ENCODE measurements at regions of chr11 and their contacts with region 1.

Region 1: GRCh38 chr11:35822815-35823495 is 120.9 kb upstream of the LDLRAD3 start:
- DNase-seq: no peak
- ATAC-seq: no peak
- H3K4me3 Mint-ChIP-seq: no peak overlapping the region
- H3K27ac Mint-ChIP-seq: no peak overlapping the region
- H3K4me1 Mint-ChIP-seq: peaks cover 15% of the 10 kb centered on the region
- H3K27me3 Mint-ChIP-seq: peaks cover 8% of the 10 kb centered on the region; the same call in 1 of the 2 replicates
- CTCF ChIP-seq: no peak

Region 2: GRCh38 chr11:35610631-35611030 is 212.3 kb before region 1 on chr11:
- CTCF ChIA-PET with region 1: interaction called, 31 read pairs
- POLR2A ChIA-PET with region 1: no interaction called
- DNase-seq: no peak
- ATAC-seq: no peak
- H3K4me3 Mint-ChIP-seq: no peak overlapping the region
- H3K27ac Mint-ChIP-seq: no peak overlapping the region
- H3K4me1 Mint-ChIP-seq: peaks cover 19% of the 10 kb centered on the region
- H3K27me3 Mint-ChIP-seq: peaks cover 21% of the 10 kb centered on the region
- CTCF ChIP-seq: no peak

Region 3: DNA sequence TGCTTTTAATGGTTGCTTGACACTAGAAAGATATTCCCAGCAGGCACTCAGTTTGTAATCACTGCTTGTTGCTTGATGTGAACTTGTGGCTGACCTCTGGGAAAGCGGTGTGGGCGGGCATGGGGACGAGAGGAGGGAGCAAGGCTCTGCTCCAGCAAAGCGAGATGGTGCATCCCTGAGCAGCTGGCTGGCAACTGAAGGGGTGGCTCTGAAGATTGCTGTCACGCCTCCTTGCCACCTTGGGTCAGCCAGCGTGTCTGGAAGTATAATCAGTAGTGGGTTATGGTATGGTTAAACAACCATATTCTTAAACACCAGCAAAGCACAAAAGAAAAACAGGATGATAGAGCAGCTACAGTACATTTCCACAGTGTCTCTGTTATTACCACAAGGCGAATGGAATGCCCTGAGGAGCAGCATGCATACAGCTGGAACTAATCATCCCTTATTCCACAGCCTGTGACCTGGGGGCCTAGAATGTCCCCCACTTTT is 35.9 kb before region 1 on chr11:
- CTCF ChIA-PET with region 1: interaction called, 32 read pairs
- POLR2A ChIA-PET with region 1: no interaction called
- DNase-seq: peak; percentile 17
- ATAC-seq: peak; percentile 71
- H3K4me3 Mint-ChIP-seq: no peak overlapping the region
- H3K27ac Mint-ChIP-seq: no peak overlapping the region
- H3K4me1 Mint-ChIP-seq: peaks cover 8% of the 10 kb centered on the region
- H3K27me3 Mint-ChIP-seq: no peaks in the 10 kb centered on the region; the same call in 1 of the 2 replicates
- CTCF ChIP-seq: no peak

Region 4: GRCh38 chr11:35919244-35919643 is 96.3 kb after region 1 on chr11:
- CTCF ChIA-PET with region 1: interaction called, 16 read pairs
- POLR2A ChIA-PET with region 1: no interaction called
- DNase-seq: no peak
- ATAC-seq: peak; percentile 51
- H3K4me3 Mint-ChIP-seq: no peak overlapping the region
- H3K27ac Mint-ChIP-seq: no peak overlapping the region
- H3K4me1 Mint-ChIP-seq: peaks cover 20% of the 10 kb centered on the region
- H3K27me3 Mint-ChIP-seq: peaks cover 4% of the 10 kb centered on the region; the same call in 1 of the 2 replicates
- CTCF ChIP-seq: no peak

Region 5: GRCh38 chr11:36023922-36024321 is 201.0 kb after region 1 on chr11:
- CTCF ChIA-PET with region 1: interaction called, 25 read pairs
- POLR2A ChIA-PET with region 1: no interaction called
- DNase-seq: no peak
- ATAC-seq: 0 out of 2 replicates have a peak, but pooled peaks have one; percentile 12
- H3K4me3 Mint-ChIP-seq: no peak overlapping the region
- H3K27ac Mint-ChIP-seq: no peak overlapping the region
- H3K4me1 Mint-ChIP-seq: peaks cover 65% of the 10 kb centered on the region
- H3K27me3 Mint-ChIP-seq: no peaks in the 10 kb centered on the region
- CTCF ChIP-seq: no peak

Region 6: DNA sequence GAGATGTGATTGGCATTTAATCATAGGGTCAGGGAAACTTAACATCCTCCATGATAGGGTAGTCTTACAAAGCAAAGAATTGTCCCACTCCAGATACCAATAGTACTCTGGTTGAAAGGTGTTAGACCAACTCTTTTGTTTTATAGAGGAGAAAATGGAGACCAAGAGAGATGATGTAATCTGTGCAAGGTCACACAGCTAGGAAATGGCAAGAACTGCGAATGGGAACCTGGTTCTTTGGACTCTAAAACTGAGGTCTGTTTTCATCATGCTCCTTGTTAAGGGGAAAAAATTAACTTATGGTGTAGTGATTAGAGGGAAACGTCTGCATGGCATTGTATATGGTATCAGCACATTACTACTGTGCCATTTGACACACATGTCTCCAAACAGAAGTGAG is 295.1 kb after region 1 on chr11:
- CTCF ChIA-PET with region 1: interaction called, 13 read pairs
- POLR2A ChIA-PET with region 1: no interaction called
- DNase-seq: no peak
- ATAC-seq: no peak
- H3K4me3 Mint-ChIP-seq: no peak overlapping the region
- H3K27ac Mint-ChIP-seq: no peak overlapping the region; the same call in 1 of the 2 replicates
- H3K4me1 Mint-ChIP-seq: peaks cover 15% of the 10 kb centered on the region
- H3K27me3 Mint-ChIP-seq: no peaks in the 10 kb centered on the region; the same call in 1 of the 2 replicates
- CTCF ChIP-seq: no peak

Region 7: GRCh38 chr11:36258730-36259360 is 435.9 kb after region 1 on chr11:
- CTCF ChIA-PET with region 1: interaction called, 110 read pairs
- POLR2A ChIA-PET with region 1: interaction called, 3 read pairs
- DNase-seq: peak; percentile 74
- ATAC-seq: peak; percentile 93
- H3K4me3 Mint-ChIP-seq: no peak overlapping the region
- H3K27ac Mint-ChIP-seq: no peak overlapping the region
- H3K4me1 Mint-ChIP-seq: peaks cover 5% of the 10 kb centered on the region; the same call in 1 of the 2 replicates
- H3K27me3 Mint-ChIP-seq: peaks cover 12% of the 10 kb centered on the region
- CTCF ChIP-seq: 0 out of 2 replicates have a peak, but pooled peaks have one; percentile 20